Psoas muscle (tissue), 8 donors: ENCODE measurements at regions of chr11 and their contacts with region 1.

Region 1: GRCh38 chr11:33161120-33162005 is at the start of gene CSTF3:
- DNase-seq: peak; percentile 100
- ATAC-seq: peak; percentile 98 to 100 (median 99)
- H3K4me3 ChIP-seq: peak within 1 kb of the TSS; percentile 82
- H3K27ac ChIP-seq: peak within 1 kb of the TSS; percentile 95
- H3K4me1 ChIP-seq: peaks cover 35% of the 10 kb centered on the region
- H3K27me3 ChIP-seq: no peaks in the 10 kb centered on the region
- CTCF ChIP-seq: peak; percentile 50
- total RNA-seq, gene CSTF3: 10.7 to 18.0 (median 13.4) TPM

Region 2: DNA sequence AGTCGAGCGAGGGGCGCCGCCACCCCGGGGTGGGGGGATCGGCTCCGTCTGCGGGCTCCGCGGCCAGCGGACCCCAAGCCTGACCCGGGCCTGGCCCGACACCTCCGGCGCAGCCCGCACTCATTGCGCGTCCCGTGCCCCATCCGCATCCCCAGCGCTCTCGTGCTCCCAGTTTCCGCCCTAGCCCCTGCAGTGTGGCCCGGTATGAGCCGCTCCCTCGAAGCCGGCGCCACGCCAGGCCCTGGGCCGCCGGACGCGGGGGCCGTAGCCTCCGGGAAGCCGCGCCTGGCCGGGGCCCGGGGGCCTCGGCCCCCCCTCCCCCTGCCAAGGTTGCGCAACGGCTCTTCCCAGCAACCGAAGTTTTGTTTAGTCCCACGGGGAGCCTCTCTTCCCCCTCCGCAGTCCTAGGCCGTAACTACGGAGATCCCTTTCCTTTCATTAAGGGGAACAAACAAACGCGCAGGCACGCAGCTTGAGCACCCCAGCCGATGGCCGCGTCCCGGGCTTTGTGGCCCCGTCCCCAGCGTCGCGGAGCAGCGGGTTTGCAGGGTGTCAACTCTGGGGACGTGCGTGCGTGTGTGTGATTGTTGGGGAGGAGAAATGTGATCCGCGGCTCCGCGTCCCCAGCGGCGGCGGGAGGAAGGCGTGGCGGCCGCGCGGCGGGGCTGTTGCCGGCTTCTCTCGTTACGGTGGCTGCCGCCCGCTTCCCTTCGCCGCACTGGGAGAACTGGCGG is 96.7 kb after region 1 on chr11:
- intact Hi-C with region 1: loop called (anchors 5 kb)
- DNase-seq: peak; percentile 90 to 94
- ATAC-seq: peak; percentile 82 to 88 (median 84)
- H3K4me3 ChIP-seq: peak overlapping the region; percentile 95
- H3K27ac ChIP-seq: peak overlapping the region; percentile 100
- H3K4me1 ChIP-seq: peaks cover 39% of the 10 kb centered on the region
- H3K27me3 ChIP-seq: no peaks in the 10 kb centered on the region
- CTCF ChIP-seq: peak; percentile 36

Region 3: DNA sequence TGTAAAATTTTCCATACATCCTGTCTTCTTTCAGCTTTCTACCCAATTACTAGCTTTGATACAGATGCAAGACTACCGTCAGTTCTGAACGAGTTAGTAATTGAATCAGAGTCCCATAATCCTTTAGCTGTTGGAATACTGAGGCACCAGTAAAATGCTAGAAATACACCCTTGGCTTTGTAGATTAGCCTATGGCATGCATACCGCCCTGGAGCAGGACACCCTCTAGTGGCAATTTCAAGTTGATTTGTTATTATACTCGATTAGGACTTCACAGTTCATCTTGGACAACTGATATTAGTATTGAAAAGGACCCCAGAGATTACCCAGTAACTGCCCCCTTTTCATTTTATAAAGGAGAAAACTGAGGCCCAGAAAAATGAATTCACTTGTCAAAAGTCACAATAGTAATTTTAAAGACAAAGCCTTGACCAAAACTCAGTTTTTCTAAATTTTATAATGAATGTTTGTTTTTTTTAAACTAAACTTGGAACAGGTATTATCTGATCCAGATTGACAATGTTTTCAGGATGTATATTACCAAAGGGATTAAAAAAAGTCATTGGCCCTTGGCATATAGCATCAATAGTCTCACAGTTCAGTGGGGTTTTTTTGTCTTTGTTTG is 168.5 kb after region 1 on chr11:
- intact Hi-C with region 1: loop called (anchors 2 kb)
- DNase-seq: no peak
- ATAC-seq: peak; percentile 70 to 84 (median 76)
- H3K4me3 ChIP-seq: no peak overlapping the region
- H3K27ac ChIP-seq: peak overlapping the region; percentile 23
- H3K4me1 ChIP-seq: peaks cover 79% of the 10 kb centered on the region
- H3K27me3 ChIP-seq: no peaks in the 10 kb centered on the region
- CTCF ChIP-seq: peak; percentile 62

Region 4: DNA sequence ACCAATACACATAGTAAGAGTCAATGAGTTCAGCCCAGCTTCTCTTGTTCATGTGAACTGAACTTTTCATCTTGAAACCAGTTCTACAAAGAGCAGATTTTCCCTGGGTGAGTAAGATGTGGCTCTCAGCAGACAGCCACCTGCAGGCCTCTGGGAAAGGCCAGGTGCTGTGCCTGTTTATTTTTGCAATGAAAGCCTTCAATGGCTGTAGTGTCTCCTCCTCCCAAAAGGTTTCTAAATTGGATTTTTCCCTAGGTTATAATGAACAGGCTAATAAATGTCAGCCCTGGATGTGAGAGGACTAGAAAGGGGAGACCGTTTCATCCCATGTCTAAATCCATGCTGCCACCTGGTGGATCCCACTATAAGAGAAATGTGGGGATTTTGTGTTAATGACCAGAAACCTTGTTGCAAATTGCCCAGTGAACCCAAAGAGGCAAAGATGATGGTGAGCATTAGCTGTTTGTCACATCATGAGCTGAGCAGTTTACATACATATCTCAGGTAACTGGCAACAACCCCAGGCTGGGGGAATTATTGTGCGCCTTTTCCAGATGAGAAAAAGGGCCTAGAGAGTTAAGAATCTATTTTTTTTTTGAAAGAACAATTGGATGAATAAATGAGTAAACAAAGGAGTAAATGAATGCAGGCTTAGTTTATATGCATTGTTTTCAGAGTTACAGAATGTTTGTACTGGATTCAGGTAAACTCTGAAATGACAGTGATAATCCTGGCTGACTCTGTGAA is 526.5 kb after region 1 on chr11:
- intact Hi-C with region 1: loop called (anchors 1 to 10 kb)
- DNase-seq: no peak
- ATAC-seq: no peak
- H3K4me3 ChIP-seq: no peak overlapping the region
- H3K27ac ChIP-seq: no peak overlapping the region
- H3K4me1 ChIP-seq: peaks cover 10% of the 10 kb centered on the region
- H3K27me3 ChIP-seq: no peaks in the 10 kb centered on the region
- CTCF ChIP-seq: peak; percentile 68

Region 5: GRCh38 chr11:34051349-34052035 is 890.1 kb after region 1 on chr11 and contains the start of gene CAPRIN1:
- intact Hi-C with region 1: loop called in 1 of 2 experiments (anchors 5 kb)
- DNase-seq: peak; percentile 87 to 94
- ATAC-seq: peak; percentile 91 to 92 (median 91)
- H3K4me3 ChIP-seq: peak within 1 kb of the TSS; percentile 92
- H3K27ac ChIP-seq: peak within 1 kb of the TSS; percentile 95
- H3K4me1 ChIP-seq: peaks cover 40% of the 10 kb centered on the region
- H3K27me3 ChIP-seq: no peaks in the 10 kb centered on the region
- CTCF ChIP-seq: no peak
- total RNA-seq, gene CAPRIN1: 70.3 to 122 (median 109) TPM